GM10248 (cell line): ENCODE measurements at regions of chr5 and their contacts with region 1.

Region 1: DNA sequence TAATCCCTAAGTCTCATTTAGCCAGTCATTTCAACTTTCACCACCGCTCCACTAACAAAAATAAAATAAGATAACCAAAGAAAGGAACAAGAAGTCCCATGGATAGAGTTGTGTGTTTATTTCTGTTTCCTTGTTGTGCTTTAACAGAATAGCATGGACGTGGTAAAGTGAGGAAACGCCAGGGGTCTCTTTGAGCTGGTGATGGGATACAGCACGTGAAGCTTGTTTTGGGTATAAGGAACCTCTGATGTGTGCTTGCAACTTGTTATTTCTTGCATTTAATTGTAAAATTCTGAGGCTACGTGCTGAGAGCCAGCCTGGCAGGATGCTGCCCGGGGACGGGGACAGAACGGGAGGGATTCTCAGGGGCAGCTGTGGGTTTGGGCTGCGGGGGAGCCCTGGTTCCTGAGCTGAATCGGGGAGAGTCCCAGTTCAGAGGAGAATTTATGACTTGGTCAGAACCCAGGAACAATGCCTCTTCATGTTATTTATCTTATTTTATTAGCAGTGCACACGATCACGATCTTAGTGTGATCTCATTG is 63.4 kb downstream of the ANKRD33B start:
- DNase-seq: peak; percentile 56
- CTCF ChIP-seq: no peak

Region 2: GRCh38 chr5:10249948-10250803 is 377.1 kb before region 1 on chr5 and contains the start of gene CCT5:
- CTCF ChIA-PET with region 1: no interaction called
- POLR2A ChIA-PET with region 1: no interaction called
- DNase-seq: peak; percentile 95
- CTCF ChIP-seq: no peak

Region 3: GRCh38 chr5:10441083-10441991 is 185.9 kb before region 1 on chr5 and contains the start of gene ROPN1L:
- CTCF ChIA-PET with region 1: interaction called, 18 read pairs
- POLR2A ChIA-PET with region 1: no interaction called
- DNase-seq: peak; percentile 96
- CTCF ChIP-seq: no peak

Region 4: GRCh38 chr5:10564838-10565784 is 62.1 kb before region 1 on chr5:
- CTCF ChIA-PET with region 1: interaction called, 42 read pairs
- POLR2A ChIA-PET with region 1: no interaction called
- DNase-seq: no peak
- CTCF ChIP-seq: no peak

Region 5: DNA sequence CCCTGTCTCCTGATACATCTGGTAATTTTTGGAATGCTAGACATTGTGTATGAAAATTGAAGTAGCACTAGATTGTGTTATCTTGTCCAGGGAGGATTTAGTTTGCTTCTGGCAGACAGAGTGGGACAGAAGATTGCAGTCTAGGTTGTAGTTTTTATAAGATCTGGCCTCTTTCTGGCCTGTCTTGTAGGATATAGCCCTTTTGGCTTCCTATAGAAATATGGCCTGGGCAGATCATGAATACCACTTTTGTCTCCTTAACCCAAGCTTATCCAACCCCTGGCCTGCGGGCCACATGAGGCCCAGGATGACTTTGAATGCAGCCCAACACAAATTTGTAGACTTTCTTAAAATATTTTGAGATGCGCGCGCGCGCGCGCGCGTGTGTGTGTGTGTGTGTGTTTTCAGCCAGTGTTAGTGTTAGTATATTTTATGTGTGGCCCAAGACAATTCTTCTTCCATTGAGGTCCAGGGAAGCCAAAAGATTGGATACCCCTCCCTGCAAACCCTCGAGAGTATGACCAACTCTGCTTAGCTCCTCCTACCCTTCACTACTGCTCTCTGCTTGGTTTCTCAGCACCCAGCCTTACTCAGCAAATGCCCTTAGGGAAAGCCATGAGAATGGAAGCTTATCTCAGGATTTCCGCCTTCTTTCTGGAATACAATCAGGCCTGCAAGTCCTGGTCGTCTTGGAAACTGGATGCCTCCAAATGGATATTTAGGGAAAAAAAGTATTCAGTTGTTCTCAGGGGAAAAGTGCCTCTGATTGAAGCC is 36.8 kb before region 1 on chr5:
- CTCF ChIA-PET with region 1: interaction called, 32 read pairs
- POLR2A ChIA-PET with region 1: interaction called, 4 read pairs
- DNase-seq: no peak
- CTCF ChIP-seq: no peak

Region 6: GRCh38 chr5:10607666-10608073 is 19.6 kb before region 1 on chr5:
- CTCF ChIA-PET with region 1: interaction called, 148 read pairs
- POLR2A ChIA-PET with region 1: interaction called, 9 read pairs
- DNase-seq: no peak
- CTCF ChIP-seq: peak; percentile 44

Region 7: GRCh38 chr5:10689391-10690081 is 62.3 kb after region 1 on chr5:
- CTCF ChIA-PET with region 1: interaction called, 18 read pairs
- POLR2A ChIA-PET with region 1: interaction called, 9 read pairs
- DNase-seq: no peak
- CTCF ChIP-seq: peak; percentile 26

Region 8: GRCh38 chr5:10949856-10950628 is 322.8 kb after region 1 on chr5:
- CTCF ChIA-PET with region 1: no interaction called
- POLR2A ChIA-PET with region 1: no interaction called
- DNase-seq: no peak
- CTCF ChIP-seq: no peak